HEK293 (cell line): ENCODE measurements at regions of chr17 and their contacts with region 1.

Region 1: GRCh38 chr17:9890124-9890523 is 14.9 kb downstream of the RCVRN start:
- H3K4me3 ChIP-seq: no peak overlapping the region
- H3K27ac ChIP-seq: no peak overlapping the region
- H3K4me1 ChIP-seq: no peaks in the 10 kb centered on the region
- CTCF ChIP-seq: no peak

Region 2: GRCh38 chr17:9729034-9729650 is 161.0 kb before region 1 on chr17:
- CTCF ChIA-PET with region 1: interaction called, 16 read pairs
- POLR2A ChIA-PET with region 1: no interaction called
- H3K4me3 ChIP-seq: no peak overlapping the region
- H3K27ac ChIP-seq: no peak overlapping the region
- H3K4me1 ChIP-seq: no peaks in the 10 kb centered on the region
- CTCF ChIP-seq: peak; percentile 63

Region 3: GRCh38 chr17:9768381-9768934 is 121.7 kb before region 1 on chr17:
- CTCF ChIA-PET with region 1: interaction called, 10 read pairs
- POLR2A ChIA-PET with region 1: no interaction called
- H3K4me3 ChIP-seq: no peak overlapping the region
- H3K27ac ChIP-seq: no peak overlapping the region
- H3K4me1 ChIP-seq: no peaks in the 10 kb centered on the region
- CTCF ChIP-seq: no peak

Region 4: DNA sequence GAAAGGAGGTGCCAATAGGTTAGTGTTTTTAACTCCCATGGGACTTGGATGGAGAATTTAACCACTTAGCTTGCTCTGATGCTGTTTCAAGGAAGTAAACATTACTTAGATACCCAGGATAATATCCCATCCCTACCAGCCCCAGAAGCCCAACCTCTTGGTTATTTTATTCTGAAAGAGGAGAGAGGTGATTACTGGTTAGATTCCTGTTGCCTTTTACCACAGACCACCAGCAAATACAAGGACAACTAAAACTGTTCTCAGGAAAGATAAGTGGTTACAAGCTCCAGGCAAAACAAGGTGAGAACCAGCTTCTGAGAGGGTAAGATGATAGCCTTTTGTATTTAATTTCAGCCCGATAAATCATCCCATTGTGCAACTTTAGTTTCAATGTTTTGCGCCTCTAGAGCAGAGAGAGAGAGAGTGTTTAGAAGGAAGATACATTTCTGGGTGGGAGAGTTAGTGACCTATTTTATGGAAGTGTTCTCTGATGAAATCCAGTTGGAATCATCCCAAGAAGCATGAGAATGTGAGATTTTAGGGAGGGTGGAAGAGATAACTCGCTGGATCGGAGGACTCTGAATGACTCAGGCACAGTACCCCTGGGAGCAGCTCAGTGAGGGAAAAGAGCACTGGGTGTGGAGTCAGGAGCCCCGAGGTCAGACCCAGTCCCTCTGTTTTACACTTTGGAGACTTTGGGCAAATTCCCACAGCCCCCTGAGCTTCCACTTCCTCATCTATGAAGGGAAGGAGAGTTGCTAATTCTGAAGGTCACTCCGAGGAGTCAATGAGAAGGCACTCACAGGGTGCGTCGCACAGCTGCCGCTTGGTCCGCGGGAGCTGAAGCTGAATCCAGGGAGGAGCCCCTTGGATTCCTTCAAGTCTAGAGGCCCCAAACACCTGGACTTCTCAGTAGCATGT is 52.3 kb before region 1 on chr17:
- CTCF ChIA-PET with region 1: interaction called, 27 read pairs
- POLR2A ChIA-PET with region 1: no interaction called
- H3K4me3 ChIP-seq: no peak overlapping the region
- H3K27ac ChIP-seq: no peak overlapping the region
- H3K4me1 ChIP-seq: peaks cover 9% of the 10 kb centered on the region
- CTCF ChIP-seq: no peak

Region 5: DNA sequence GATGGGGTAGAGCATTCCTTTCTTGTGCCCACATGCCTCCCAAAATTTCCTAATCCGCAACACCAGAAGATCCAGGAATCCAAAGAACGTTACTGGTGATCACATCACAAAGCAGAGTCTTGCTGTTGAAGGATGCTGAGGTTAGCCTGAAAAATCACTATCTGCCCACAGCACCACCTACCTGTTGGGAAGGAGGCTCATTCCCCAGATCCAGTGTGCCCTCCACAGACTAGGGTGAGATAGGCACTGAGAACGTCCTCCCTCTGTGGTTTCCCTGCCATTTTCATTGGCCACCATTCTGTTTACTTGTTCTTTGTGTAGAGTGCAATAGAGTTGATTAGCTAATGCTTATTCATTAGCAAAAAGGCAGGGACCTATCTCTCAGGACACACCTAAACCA is 15.4 kb before region 1 on chr17:
- CTCF ChIA-PET with region 1: interaction called, 56 read pairs
- POLR2A ChIA-PET with region 1: no interaction called
- H3K4me3 ChIP-seq: no peak overlapping the region
- H3K27ac ChIP-seq: no peak overlapping the region
- H3K4me1 ChIP-seq: no peaks in the 10 kb centered on the region
- CTCF ChIP-seq: no peak

Region 6: DNA sequence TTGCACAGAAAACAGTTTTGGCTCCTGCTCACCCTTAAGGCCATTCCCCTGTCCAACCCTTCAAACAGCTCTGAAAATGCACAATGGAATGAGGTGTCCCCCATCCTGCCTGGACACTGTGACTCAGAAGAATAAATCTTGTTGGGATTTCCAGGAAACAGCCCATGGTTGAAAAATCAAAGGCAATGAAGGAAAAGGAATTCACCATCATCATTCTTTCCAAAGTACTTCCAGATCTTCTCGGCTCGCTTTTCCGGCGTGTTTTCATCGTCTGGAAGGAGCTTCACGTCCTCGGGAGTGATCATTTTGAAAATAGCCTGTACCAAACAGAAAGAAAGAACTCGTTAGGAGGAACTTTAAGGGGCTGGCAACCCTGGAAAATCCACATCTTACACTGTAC is 10.7 kb after region 1 on chr17:
- CTCF ChIA-PET with region 1: interaction called, 34 read pairs
- POLR2A ChIA-PET with region 1: interaction called, 7 read pairs
- H3K4me3 ChIP-seq: no peak overlapping the region
- H3K27ac ChIP-seq: no peak overlapping the region
- H3K4me1 ChIP-seq: no peaks in the 10 kb centered on the region
- CTCF ChIP-seq: no peak

Region 7: DNA sequence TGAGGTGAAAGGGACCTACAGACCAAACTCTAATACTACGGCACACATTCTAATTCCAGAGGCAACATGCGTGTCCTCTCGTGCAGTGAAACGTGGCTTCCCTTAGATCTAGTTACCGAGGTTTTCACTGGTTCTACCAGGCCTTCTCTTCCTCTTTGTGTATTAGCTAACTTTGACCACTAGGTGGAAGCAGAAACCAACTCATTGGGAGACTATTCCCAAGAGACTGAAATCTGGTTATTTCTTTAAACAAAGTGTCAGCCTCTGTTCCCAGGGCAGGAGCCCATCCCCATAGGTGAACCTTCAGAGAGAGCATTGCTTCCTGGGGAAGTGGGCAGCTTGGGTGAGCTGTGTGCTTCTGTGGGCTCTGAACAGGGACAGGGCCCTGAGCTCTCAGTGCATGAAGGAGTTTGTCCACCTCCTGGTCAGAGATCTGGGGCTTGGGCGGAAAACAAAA is 34.6 kb after region 1 on chr17:
- CTCF ChIA-PET with region 1: interaction called, 18 read pairs
- POLR2A ChIA-PET with region 1: no interaction called
- H3K4me3 ChIP-seq: no peak overlapping the region
- H3K27ac ChIP-seq: no peak overlapping the region
- H3K4me1 ChIP-seq: peaks cover 6% of the 10 kb centered on the region; the same call in 1 of the 2 replicates
- CTCF ChIP-seq: peak; percentile 69

Region 8: DNA sequence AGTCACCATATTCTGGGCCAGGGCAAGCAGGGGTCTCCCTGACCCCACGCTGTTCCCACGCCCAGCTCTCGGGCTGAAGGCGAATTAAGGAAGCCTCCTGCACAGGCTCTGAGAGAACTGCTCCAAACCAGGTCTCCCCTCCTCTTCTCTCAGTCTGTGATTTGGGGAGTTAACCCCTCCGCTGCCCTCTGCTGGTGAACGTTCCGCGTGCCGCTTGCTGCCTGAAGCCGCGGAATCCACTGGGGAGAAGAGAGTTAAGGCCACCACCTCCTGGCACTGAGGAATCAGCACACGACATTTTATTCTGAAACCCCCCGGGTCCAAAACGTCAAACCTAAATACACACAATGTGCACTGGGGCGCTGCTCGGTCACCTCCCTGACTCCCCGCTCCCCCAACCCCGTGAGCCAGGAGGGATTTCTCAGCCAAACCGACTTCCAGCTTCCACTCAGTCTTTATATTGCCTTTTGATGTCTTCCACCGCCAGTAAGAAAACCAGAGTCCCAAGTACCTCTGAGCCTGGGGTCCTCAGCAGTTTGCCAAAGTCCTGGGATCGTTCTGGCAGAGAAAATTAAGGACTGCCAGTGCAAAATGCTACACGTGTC is 69.4 kb after region 1 on chr17:
- CTCF ChIA-PET with region 1: no interaction called
- POLR2A ChIA-PET with region 1: no interaction called
- H3K4me3 ChIP-seq: no peak overlapping the region
- H3K27ac ChIP-seq: no peak overlapping the region
- H3K4me1 ChIP-seq: no peaks in the 10 kb centered on the region
- CTCF ChIP-seq: peak; percentile 77